Mammary epithelial cell (primary cell): ENCODE measurements at regions of chr14 and their contacts with region 1.

Region 1: DNA sequence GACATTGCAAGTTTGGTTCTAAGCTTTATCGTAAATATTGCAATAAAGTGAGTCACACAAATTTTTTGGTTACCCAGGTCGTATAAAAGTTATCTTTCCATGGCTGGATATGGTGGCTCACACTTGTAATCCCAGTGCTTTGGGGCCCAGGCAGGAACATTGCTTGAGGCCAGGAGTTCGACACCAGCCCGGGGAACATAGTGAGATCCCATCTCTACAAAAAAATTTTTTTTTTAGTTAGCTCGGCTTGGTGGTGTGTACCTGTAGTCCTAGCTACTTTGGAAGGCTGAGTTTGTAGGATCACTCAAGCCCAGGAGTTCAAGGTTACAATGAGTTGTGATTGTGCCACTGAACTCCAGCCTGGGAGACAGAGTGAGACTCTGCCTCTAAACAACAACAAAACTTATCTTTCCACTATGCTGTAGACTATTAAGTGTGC is 24.4 kb downstream of the PRORP start:
- DNase-seq: no peak
- H3K4me3 ChIP-seq: no peak overlapping the region
- H3K27ac ChIP-seq: no peak overlapping the region
- H3K4me1 ChIP-seq: no peaks in the 10 kb centered on the region
- H3K27me3 ChIP-seq: no peaks in the 10 kb centered on the region
- CTCF ChIP-seq: no peak

Region 2: GRCh38 chr14:35121026-35121886 is 25.5 kb before region 1 on chr14:
- CTCF ChIA-PET with region 1: no interaction called
- dilution Hi-C with region 1: no loop called
- in situ Hi-C with region 1: no loop called
- intact Hi-C with region 1: no loop called
- DNase-seq: no peak
- H3K4me3 ChIP-seq: peak overlapping the region; percentile 54 to 67 (median 61)
- H3K27ac ChIP-seq: peak overlapping the region; percentile 99
- H3K4me1 ChIP-seq: peaks cover 11% of the 10 kb centered on the region
- H3K27me3 ChIP-seq: no peaks in the 10 kb centered on the region
- CTCF ChIP-seq: no peak

Region 3: GRCh38 chr14:35134328-35135123 is 12.2 kb before region 1 on chr14:
- CTCF ChIA-PET with region 1: no interaction called
- dilution Hi-C with region 1: no loop called
- in situ Hi-C with region 1: no loop called
- intact Hi-C with region 1: loop called (anchors 1 kb)
- DNase-seq: peak; percentile 83
- H3K4me3 ChIP-seq: no peak overlapping the region
- H3K27ac ChIP-seq: no peak overlapping the region
- H3K4me1 ChIP-seq: peaks cover 5% of the 10 kb centered on the region
- H3K27me3 ChIP-seq: no peaks in the 10 kb centered on the region
- CTCF ChIP-seq: no peak